ENCODE measurements at regions of chr7 and their contacts with region 1.

Region 1: GRCh38 chr7:136064081-136064480 is 86.9 kb upstream of the MTPN start:
- DNase-seq: peak; percentile 41
- H3K4me3 Mint-ChIP-seq: no peak overlapping the region
- H3K27ac Mint-ChIP-seq: peak overlapping the region; percentile 77
- H3K4me1 Mint-ChIP-seq: peaks cover 29% of the 10 kb centered on the region
- H3K27me3 Mint-ChIP-seq: no peaks in the 10 kb centered on the region

Region 2: DNA sequence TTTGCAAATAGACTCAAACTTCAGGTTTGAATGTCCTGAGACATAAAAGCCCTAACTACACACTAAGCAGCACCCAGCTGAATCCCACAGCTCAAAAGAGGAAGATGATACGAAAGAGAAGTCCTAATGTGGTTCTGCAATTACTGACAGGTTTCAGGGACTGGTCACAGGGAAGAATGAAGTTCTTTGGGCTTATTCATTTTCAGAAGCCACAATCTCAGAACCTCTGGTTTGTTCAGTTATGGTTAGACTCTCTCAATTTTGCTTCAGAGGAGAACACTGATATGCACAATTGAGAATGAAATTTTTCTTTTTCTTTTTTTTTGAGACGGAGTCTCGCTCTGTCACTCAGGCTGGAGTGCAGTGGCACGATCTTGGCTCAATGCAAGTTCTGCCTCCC is 220.9 kb before region 1 on chr7:
- CTCF ChIA-PET with region 1: no interaction called
- POLR2A ChIA-PET with region 1: no interaction called
- intact Hi-C with region 1: loop called (anchors 1 kb)
- DNase-seq: peak; percentile 17
- H3K4me3 Mint-ChIP-seq: no peak overlapping the region
- H3K27ac Mint-ChIP-seq: no peak overlapping the region
- H3K4me1 Mint-ChIP-seq: peaks cover 9% of the 10 kb centered on the region
- H3K27me3 Mint-ChIP-seq: peaks cover 3% of the 10 kb centered on the region

Region 3: GRCh38 chr7:135853499-135853898 is 210.6 kb before region 1 on chr7:
- CTCF ChIA-PET with region 1: no interaction called
- POLR2A ChIA-PET with region 1: no interaction called
- intact Hi-C with region 1: no loop called
- DNase-seq: no peak
- H3K4me3 Mint-ChIP-seq: no peak overlapping the region
- H3K27ac Mint-ChIP-seq: no peak overlapping the region
- H3K4me1 Mint-ChIP-seq: peaks cover 4% of the 10 kb centered on the region
- H3K27me3 Mint-ChIP-seq: no peaks in the 10 kb centered on the region

Region 4: GRCh38 chr7:135942614-135943013 is 121.5 kb before region 1 on chr7:
- CTCF ChIA-PET with region 1: no interaction called
- POLR2A ChIA-PET with region 1: no interaction called
- intact Hi-C with region 1: no loop called
- DNase-seq: no peak
- H3K4me3 Mint-ChIP-seq: no peak overlapping the region
- H3K27ac Mint-ChIP-seq: no peak overlapping the region
- H3K4me1 Mint-ChIP-seq: peaks cover 52% of the 10 kb centered on the region
- H3K27me3 Mint-ChIP-seq: no peaks in the 10 kb centered on the region

Region 5: DNA sequence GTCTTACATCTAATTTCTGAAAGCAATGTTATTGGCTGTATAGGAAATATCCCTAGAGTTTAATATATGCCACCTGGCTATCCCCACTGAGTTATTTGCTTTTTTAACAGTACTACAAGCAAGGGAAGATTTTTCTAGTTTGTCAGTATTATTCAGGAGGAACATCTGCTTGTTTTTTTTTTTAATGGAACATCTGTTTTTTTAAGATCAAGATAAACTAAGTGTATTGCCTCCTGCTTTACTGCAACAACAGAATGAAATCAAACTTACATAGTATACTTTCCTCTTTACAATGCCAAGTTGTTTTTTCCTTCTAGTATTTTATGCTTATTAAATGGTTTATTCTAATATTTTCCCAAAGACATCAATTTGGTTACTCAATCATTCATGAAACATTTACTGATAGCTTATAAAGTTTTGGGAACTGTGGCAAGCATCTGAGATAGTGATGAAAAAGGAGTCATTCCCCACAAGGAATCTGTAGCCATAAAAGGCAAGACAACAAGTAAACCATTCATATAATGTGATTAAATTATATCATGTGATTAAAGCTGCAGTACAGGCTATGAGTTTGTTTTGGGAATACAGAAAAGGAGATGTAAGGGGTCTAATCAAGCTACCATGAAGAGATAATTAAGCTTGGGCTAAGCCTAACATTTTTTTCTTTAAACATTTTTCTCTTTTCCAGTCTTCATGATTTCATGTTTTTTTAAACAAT is 104.3 kb before region 1 on chr7:
- CTCF ChIA-PET with region 1: no interaction called
- POLR2A ChIA-PET with region 1: no interaction called
- intact Hi-C with region 1: no loop called
- DNase-seq: no peak
- H3K4me3 Mint-ChIP-seq: no peak overlapping the region
- H3K27ac Mint-ChIP-seq: no peak overlapping the region
- H3K4me1 Mint-ChIP-seq: peaks cover 61% of the 10 kb centered on the region
- H3K27me3 Mint-ChIP-seq: no peaks in the 10 kb centered on the region

Region 6: DNA sequence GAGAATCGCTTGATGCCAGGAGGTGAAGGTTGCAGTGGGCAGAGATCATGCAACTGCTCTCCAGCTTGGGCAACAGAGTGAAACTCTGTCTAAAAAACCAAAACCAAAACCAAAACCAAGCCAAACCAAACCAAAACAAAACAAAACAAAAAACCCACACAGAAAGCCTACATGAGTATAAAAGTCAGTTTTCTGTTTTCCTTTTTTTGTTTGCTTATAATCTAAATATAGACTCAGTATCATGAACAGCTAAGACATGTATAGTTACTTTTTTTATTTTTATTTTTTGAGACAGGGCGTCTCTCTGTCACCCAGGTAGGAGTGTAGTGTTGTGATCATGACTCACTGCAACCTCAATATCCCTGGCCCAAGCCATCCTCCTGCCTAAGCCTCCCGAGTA is 70.1 kb before region 1 on chr7:
- CTCF ChIA-PET with region 1: no interaction called
- POLR2A ChIA-PET with region 1: no interaction called
- intact Hi-C with region 1: loop called (anchors 1 kb)
- DNase-seq: no peak
- H3K4me3 Mint-ChIP-seq: no peak overlapping the region
- H3K27ac Mint-ChIP-seq: peak overlapping the region; percentile 54
- H3K4me1 Mint-ChIP-seq: peaks cover 25% of the 10 kb centered on the region
- H3K27me3 Mint-ChIP-seq: no peaks in the 10 kb centered on the region

Region 7: DNA sequence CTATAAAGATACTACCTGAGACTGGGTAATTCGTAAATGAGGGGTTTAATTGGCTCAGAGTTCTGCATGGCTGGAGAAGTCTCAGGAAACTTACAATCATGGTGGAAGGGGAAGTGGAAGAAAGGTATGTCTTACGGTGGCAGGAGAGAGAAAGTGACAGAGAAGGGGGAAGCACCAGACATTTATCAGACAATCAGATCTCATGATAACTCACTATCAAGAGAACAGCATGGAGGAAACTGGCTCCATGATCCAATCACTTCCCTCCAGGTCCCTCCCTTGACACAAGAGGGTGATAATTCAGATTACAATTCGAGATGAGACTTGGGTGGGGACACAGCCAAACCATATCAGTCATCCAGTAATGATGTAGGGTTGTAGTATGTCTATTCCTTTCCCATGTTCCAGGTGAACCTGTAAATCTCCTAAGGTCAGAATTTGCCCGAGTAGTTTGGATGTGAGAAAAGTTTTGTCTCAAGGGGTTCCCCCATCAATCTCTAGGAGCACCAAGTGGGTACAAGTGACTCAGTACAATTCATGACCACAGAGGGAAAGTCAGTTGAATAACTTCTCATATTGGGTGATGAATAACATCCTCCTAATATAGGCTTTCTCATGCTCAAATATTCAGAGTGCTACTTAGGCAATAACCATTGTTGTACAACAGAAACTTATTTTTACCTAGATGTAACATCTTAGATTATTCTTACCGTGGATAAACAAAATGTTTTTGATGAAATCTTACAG is 47.3 kb before region 1 on chr7:
- CTCF ChIA-PET with region 1: interaction called, 4 read pairs
- POLR2A ChIA-PET with region 1: interaction called, 4 read pairs
- intact Hi-C with region 1: loop called (anchors 1 kb)
- DNase-seq: no peak
- H3K4me3 Mint-ChIP-seq: no peak overlapping the region
- H3K27ac Mint-ChIP-seq: no peak overlapping the region
- H3K4me1 Mint-ChIP-seq: peaks cover 22% of the 10 kb centered on the region
- H3K27me3 Mint-ChIP-seq: peaks cover 10% of the 10 kb centered on the region

Region 8: DNA sequence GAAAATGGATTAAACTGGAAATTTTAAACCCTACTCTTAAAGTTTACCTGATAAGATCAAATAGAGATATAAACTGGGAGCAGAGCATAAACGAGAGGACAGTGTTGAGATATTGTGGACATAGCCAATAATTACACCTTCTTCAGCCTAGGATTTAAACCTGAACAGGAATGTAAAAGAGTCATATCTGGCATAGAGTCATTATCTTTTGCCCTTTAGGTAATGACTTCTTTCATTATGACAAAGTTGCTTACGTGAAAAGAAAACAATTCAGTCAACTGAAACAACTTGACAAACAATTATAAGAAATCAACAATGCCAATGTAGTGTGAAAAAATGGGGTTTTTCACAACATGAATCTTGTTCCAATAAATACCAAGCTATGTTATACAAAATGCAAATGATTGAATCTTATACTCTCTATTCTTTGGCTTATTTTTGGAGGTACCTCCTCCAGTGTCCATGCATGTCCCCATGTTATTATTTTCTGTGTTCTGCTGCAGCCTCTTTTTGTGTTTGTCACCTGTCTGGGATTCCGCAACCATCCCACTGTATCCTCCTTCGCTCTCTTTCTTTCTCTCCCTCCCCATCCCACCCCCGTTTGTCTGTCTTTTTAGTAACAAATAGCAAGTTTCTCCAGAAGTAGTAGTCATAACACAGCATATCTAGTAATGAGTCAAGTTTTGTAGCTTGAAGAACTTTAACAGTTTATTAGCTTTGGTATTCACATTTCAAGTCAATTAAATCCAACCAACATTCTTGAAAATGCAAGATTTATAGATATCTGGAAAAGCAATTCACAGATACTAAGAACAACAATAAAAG is 67.0 kb after region 1 on chr7:
- CTCF ChIA-PET with region 1: no interaction called
- POLR2A ChIA-PET with region 1: no interaction called
- intact Hi-C with region 1: loop called (anchors 1 kb)
- DNase-seq: no peak
- H3K4me3 Mint-ChIP-seq: no peak overlapping the region
- H3K27ac Mint-ChIP-seq: peak overlapping the region; percentile 44
- H3K4me1 Mint-ChIP-seq: peaks cover 14% of the 10 kb centered on the region
- H3K27me3 Mint-ChIP-seq: no peaks in the 10 kb centered on the region

Region 9: DNA sequence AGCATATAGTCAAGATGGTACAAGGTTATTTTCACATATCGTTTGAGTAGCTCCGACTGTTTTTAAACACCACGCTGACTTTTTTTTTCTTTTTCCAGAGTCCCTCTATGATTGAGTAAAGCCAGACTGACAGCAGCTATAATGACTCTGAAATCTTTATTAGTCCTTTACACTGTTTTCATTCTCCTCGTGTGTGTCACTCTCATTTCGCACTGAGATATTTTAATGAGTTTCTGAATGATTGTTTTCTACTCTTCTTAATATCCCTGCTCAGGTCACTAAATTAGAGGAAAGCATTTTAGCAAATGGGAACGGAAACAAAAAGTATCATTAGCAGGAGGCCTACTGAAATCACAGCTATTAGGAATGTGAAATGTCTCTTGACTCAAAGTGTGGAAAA is 75.3 kb after region 1 on chr7:
- CTCF ChIA-PET with region 1: no interaction called
- POLR2A ChIA-PET with region 1: no interaction called
- intact Hi-C with region 1: loop called (anchors 2 kb)
- DNase-seq: no peak
- H3K4me3 Mint-ChIP-seq: no peak overlapping the region
- H3K27ac Mint-ChIP-seq: no peak overlapping the region
- H3K4me1 Mint-ChIP-seq: peaks cover 4% of the 10 kb centered on the region
- H3K27me3 Mint-ChIP-seq: no peaks in the 10 kb centered on the region

Measured in activated CD4-positive, alpha-beta memory T cell treated with anti-CD3 and anti-CD28 coated beads for 36 hours (primary cell).